Activated CD8-positive, alpha-beta T cell treated with anti-CD3 and anti-CD28 coated beads, Interleukin-2, amount 10 ng/mL, durations not matched to agents 7 days and 5 days (primary cell): ENCODE measurements at regions of chr1 and their contacts with region 1.

Region 1: DNA sequence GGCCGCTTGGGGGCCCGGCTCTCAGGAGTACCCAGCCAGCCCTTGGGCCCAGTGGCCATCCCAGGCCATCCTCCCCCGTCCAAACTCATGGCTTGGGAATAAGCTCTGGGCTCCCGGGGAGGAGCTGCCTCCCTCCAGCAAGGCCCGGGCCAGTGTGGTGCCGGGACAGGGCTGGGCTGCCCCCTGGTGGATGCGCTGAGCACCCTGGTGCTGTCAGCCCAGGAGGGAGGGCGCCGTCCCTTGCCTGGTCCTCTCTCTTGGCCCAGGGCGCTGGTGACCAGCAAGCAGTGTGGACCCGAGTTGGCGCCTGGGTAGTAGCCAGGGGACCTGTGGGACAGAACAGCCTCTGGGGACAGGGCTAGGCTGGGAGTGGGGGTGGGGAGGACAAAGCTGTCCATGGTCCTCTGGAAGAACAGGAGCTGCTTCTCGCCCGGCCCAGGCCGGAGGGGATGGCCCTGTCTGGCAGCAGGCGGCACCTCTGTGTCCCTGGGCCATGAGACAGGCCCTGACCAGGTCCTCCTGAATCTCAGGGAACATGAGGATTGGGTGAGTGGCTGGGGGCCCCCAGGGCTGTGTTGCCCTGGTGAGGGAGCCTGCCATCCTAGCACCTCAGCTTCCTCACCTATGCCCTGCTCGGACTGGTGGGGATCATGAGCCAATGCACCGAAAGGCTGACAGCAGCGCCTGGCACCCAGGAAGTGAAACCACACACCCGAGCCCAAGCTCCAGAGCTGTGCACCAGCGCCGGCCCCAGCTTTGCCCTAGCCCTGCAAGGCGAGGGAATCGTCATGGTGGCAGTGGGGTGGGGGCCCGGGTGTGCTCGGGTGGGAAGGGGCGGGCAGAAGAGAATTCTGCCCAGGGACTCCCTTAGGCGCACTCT is 9.4 kb downstream of the MORN1 start:
- DNase-seq: peak; percentile 81
- ATAC-seq: peak; percentile 97
- H3K4me3 Mint-ChIP-seq: no peak overlapping the region
- H3K27ac Mint-ChIP-seq: no peak overlapping the region
- H3K4me1 Mint-ChIP-seq: peaks cover 9% of the 10 kb centered on the region
- H3K27me3 Mint-ChIP-seq: no peaks in the 10 kb centered on the region

Region 2: DNA sequence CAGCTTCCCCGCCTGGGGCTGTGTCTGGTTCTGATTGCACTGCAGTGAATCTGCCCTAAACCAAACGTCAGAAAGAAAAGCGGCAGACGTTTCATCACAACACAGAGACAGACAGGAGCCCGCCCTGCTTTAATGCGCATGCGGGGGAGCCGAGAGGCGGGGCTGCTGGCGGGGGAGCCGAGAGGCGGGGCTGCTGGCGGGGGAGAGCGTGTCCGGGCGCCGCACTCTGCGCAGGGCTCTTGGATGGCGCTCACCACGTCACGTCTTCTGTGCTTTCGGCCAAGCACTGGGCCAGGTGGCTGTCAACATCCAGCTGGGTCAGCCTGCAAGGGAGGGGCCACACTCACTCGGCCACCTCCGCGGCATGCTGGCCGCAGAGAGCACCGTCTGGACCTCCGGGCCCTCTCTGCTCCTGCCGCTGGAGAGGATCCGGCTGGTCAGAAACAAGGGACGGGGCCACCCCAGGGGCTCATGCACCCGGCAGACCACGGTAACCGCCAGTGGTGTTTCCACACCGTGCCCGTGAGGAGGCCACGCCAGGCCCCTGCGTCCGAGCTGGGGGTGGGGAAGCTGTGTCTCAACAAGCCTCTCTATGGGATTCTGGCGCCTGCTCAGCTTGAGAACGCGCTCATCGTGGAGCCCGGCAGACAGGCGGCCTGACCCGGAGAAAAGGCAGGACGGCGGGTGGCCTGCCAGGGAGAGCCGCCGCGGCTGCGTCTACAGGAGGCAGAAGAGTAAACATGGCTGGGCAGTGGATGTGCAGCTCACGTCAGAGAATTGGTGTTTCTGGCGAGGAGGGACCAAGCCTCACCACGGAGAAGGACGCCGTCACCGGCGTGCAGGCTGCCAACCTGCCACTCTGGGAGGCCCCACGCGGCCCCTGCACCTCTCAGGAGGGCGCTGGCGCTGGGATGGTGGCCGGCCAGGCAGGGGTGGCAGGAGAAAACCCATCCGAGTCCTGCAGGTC is 192.2 kb before region 1 on chr1:
- CTCF ChIA-PET with region 1: interaction called, 259 read pairs
- POLR2A ChIA-PET with region 1: interaction called, 31 read pairs
- DNase-seq: peak; percentile 94
- ATAC-seq: peak; percentile 95
- H3K4me3 Mint-ChIP-seq: peak overlapping the region; percentile 79
- H3K27ac Mint-ChIP-seq: peak overlapping the region; percentile 94
- H3K4me1 Mint-ChIP-seq: peaks cover 23% of the 10 kb centered on the region
- H3K27me3 Mint-ChIP-seq: no peaks in the 10 kb centered on the region

Region 3: GRCh38 chr1:2205191-2205952 is 176.6 kb before region 1 on chr1:
- CTCF ChIA-PET with region 1: interaction called, 259 read pairs
- POLR2A ChIA-PET with region 1: interaction called, 3 read pairs
- DNase-seq: peak; percentile 96
- ATAC-seq: peak; percentile 89
- H3K4me3 Mint-ChIP-seq: peak overlapping the region; percentile 55
- H3K27ac Mint-ChIP-seq: peak overlapping the region; percentile 61
- H3K4me1 Mint-ChIP-seq: peaks cover 10% of the 10 kb centered on the region
- H3K27me3 Mint-ChIP-seq: no peaks in the 10 kb centered on the region

Region 4: GRCh38 chr1:2233997-2234761 is 147.8 kb before region 1 on chr1:
- CTCF ChIA-PET with region 1: interaction called, 17 read pairs
- POLR2A ChIA-PET with region 1: interaction called, 3 read pairs
- DNase-seq: peak; percentile 90
- ATAC-seq: peak; percentile 73
- H3K4me3 Mint-ChIP-seq: peak overlapping the region; percentile 77
- H3K27ac Mint-ChIP-seq: peak overlapping the region; percentile 90
- H3K4me1 Mint-ChIP-seq: peaks cover 78% of the 10 kb centered on the region
- H3K27me3 Mint-ChIP-seq: no peaks in the 10 kb centered on the region

Region 5: DNA sequence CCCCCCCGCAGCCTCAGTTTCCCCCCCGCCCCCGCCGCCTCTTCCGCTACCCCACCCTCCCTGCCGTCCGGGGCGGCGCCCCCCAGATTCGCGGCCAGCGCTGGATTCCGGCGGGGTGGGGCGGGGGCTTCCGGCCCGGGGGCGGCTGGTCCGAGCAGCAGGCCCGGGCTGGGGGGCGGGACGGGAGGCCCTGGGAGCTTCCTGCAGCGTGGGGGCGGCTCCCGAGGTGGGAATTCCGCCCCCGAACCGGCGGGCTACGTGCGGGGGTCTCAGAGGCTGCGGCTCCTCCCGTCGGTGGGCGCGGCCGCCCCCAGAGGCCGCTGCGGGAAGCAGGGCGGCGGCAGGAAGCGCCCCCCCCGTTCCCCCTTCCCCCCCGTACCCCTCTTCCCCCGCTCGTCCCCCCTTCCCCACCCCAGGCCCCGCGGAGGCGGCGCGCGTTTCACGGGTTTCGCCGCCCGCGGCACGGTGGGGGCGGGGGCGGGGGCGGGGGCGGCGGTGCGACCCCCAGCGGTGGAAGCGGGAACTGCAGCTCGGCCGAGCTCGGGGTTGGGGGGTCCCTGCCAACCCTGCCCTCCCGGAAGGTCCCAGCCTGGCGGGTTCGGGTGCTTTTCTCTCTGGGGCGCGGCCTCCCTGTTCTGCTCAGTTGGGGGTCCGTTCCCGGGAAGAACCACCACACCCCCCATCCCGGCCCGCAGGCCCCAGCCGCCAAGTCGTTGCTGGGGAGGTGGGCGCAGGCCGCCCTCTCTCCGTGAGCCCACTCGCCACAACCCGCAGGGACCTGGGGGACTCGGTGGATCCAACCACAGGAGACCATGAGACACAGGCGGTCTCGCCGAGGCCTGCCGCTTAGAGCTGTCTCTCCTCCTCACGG is 66.9 kb before region 1 on chr1:
- CTCF ChIA-PET with region 1: interaction called, 11 read pairs
- POLR2A ChIA-PET with region 1: no interaction called
- DNase-seq: peak; percentile 63
- ATAC-seq: peak; percentile 37
- H3K4me3 Mint-ChIP-seq: peak overlapping the region; percentile 53
- H3K27ac Mint-ChIP-seq: peak overlapping the region; percentile 52
- H3K4me1 Mint-ChIP-seq: peaks cover 27% of the 10 kb centered on the region
- H3K27me3 Mint-ChIP-seq: no peaks in the 10 kb centered on the region

Region 6: DNA sequence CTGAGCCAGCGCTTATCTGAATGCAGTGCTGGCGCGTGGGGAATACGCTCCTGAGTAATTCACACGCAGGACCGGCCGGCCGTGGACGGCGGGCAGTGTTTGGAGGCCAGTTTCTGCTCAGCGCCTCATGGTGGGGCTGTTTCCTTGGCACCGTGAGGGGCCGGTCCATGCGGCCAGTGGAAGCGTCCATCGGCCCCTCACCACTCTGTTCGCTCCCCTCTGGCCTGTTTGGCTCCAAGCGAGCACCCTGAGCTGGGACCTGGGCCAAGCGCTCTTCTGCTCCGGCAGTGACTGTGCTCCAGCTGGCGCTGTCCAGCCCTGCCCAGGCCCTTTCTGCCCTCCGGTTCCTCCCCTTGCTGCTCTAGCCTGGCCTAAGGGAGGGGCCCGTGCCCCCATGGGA is 77.8 kb after region 1 on chr1:
- CTCF ChIA-PET with region 1: no interaction called
- POLR2A ChIA-PET with region 1: no interaction called
- DNase-seq: no peak
- ATAC-seq: no peak
- H3K4me3 Mint-ChIP-seq: no peak overlapping the region
- H3K27ac Mint-ChIP-seq: no peak overlapping the region
- H3K4me1 Mint-ChIP-seq: no peaks in the 10 kb centered on the region
- H3K27me3 Mint-ChIP-seq: no peaks in the 10 kb centered on the region